ENCODE measurements at regions of chrX and their contacts with region 1.

Region 1: DNA sequence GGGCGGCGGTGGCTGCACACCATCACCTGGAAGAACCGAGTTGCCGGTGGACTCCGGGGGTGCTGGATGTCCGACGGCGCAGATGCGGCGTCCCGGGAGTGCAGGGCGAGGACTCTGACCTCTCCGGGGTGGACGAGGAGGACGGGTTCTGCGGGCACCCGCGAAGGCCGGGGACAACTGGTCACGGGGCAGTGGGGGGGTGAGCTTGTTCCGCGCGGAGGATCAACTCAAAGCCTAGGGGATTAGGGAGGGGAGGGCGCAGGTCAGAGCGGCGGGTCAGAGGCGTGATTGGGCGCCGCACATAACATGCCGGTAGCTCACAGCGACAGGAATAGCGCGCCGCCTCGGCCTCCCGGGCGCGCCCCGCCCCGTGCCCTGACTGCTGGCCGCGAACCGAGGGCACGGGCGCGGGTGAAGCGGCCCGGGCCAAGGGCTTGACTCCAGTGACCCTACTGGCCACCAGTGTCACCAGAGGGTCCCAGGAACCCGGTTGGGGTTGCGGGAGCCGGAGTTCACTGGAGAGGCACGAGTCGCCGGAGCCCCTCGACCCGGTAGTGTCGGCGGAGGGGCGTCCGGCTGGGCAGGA is at the start of gene KLHL34:
- DNase-seq: peak; percentile 43 to 74
- ATAC-seq: peak; percentile 72 to 73
- H3K4me3 ChIP-seq: peak within 1 kb of the TSS; percentile 48 to 57 (median 54)
- H3K27ac ChIP-seq: peak within 1 kb of the TSS; percentile 92 to 95 (median 93)
- H3K4me1 ChIP-seq: peaks cover 0 to 20% of the 10 kb centered on the region in 2 donors
- H3K27me3 ChIP-seq: no peaks in the 10 kb centered on the region
- CTCF ChIP-seq: no peak
- POLR2A ChIP-seq: peak; percentile 45 to 66
- total RNA-seq, gene KLHL34: 2.2 to 6.2 (median 3.4) TPM

Region 2: GRCh38 chrX:21528076-21528475 is 130.2 kb before region 1 on chrX:
- in situ Hi-C with region 1: no loop called
- intact Hi-C with region 1: no loop called
- DNase-seq: no peak
- ATAC-seq: no peak
- H3K4me3 ChIP-seq: no peak overlapping the region
- H3K27ac ChIP-seq: no peak overlapping the region
- H3K4me1 ChIP-seq: no peaks in the 10 kb centered on the region
- H3K27me3 ChIP-seq: no peaks in the 10 kb centered on the region
- CTCF ChIP-seq: no peak
- POLR2A ChIP-seq: no peak

Region 3: GRCh38 chrX:21711129-21711847 is 53.0 kb after region 1 on chrX:
- in situ Hi-C with region 1: no loop called
- intact Hi-C with region 1: loop called (anchors 5 kb)
- DNase-seq: peak; percentile 20 to 47
- ATAC-seq: peak; percentile 85 to 89
- H3K4me3 ChIP-seq: no peak overlapping the region
- H3K27ac ChIP-seq: peak overlapping the region; percentile 69 to 79 (median 70)
- H3K4me1 ChIP-seq: peaks cover 2 to 8% of the 10 kb centered on the region in 2 donors
- H3K27me3 ChIP-seq: no peaks in the 10 kb centered on the region
- CTCF ChIP-seq: no peak
- POLR2A ChIP-seq: peak in 1 of 2 donors; percentile 9

Region 4: DNA sequence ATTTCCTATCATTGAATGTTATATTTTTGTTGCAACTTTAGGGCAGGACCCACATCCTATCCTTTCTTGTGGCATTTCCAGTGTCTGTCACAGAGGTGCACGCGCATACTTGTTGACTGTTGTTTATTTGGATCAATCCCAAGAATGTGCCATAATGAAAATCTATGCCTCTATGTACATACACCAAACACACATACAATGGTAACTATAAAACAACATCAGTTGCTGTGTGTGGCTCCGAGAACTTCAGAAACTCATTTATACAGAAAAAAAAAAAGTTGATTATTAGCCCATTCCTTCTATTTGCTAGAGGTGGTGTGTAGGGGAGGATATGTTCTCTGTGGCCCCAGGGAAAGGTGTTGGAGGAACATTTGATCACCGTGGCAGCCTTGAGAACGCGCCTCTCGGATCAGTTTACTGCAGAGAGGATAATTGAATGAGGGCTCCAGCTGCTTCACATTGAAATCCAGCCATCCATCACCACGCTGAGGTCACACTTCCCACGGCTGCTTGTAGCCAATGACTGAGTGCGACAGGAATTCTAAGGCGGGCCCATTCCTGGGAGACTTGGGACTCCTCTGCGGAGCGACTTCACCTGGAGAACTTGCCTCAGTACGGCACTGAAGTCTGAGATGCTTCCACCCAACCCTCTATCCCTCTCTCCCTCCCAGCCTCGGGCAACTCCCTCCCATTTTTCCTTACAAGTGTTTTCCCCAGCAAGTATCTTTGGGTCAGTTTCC is 80.1 kb after region 1 on chrX:
- in situ Hi-C with region 1: no loop called
- intact Hi-C with region 1: loop called (anchors 5 kb)
- DNase-seq: peak; percentile 62 to 75
- ATAC-seq: peak; percentile 77 to 81
- H3K4me3 ChIP-seq: no peak overlapping the region
- H3K27ac ChIP-seq: peak overlapping the region; percentile 65 to 92 (median 80)
- H3K4me1 ChIP-seq: peaks cover 27 to 30% of the 10 kb centered on the region in 2 donors
- H3K27me3 ChIP-seq: no peaks in the 10 kb centered on the region
- CTCF ChIP-seq: no peak
- POLR2A ChIP-seq: no peak

Region 5: DNA sequence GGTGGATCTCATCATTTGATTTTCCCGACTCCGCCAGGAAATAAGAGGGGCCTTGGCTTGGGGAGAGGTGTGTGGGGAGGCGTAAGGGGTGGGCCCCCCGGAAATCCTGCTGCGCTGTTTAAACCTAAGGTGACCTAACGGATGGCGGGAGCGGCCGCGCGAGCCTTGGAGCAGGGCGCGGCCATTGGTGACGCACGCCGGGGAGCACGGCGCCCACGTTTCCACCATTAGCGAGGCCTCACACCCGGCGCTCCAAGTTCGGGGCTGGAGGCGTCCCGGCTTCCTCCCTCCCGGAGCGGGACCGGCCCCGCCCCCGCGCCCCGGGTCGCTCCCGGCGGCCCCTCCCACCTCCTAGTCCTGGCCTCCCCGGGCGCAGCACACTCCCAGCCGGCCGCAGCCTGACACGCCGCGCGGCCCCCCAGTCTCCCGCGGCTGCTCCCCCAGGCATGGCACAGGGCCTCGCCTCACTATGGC is 282.1 kb after region 1 on chrX and contains the start of gene SMS:
- in situ Hi-C with region 1: no loop called
- intact Hi-C with region 1: loop called (anchors 5 kb)
- DNase-seq: peak; percentile 35 to 55
- ATAC-seq: peak; percentile 80 to 84
- H3K4me3 ChIP-seq: peak within 1 kb of the TSS; percentile 53 to 56 (median 54)
- H3K27ac ChIP-seq: peak within 1 kb of the TSS; percentile 64 to 74 (median 72)
- H3K4me1 ChIP-seq: no peaks in the 10 kb centered on the region
- H3K27me3 ChIP-seq: no peaks in the 10 kb centered on the region
- CTCF ChIP-seq: no peak
- POLR2A ChIP-seq: peak; percentile 55 to 61
- total RNA-seq, gene SMS: 9.3 to 32.0 (median 20.0) TPM

Region 6: GRCh38 chrX:22025751-22026150 is 367.5 kb after region 1 on chrX:
- in situ Hi-C with region 1: no loop called
- intact Hi-C with region 1: no loop called
- DNase-seq: no peak
- ATAC-seq: no peak
- H3K4me3 ChIP-seq: no peak overlapping the region
- H3K27ac ChIP-seq: no peak overlapping the region
- H3K4me1 ChIP-seq: no peaks in the 10 kb centered on the region
- H3K27me3 ChIP-seq: no peaks in the 10 kb centered on the region
- CTCF ChIP-seq: no peak
- POLR2A ChIP-seq: no peak